Activated CD4-positive, alpha-beta memory T cell treated with anti-CD3 and anti-CD28 coated beads for 36 hours (primary cell): ENCODE measurements at regions of chr19 and their contacts with region 1.

Region 1: DNA sequence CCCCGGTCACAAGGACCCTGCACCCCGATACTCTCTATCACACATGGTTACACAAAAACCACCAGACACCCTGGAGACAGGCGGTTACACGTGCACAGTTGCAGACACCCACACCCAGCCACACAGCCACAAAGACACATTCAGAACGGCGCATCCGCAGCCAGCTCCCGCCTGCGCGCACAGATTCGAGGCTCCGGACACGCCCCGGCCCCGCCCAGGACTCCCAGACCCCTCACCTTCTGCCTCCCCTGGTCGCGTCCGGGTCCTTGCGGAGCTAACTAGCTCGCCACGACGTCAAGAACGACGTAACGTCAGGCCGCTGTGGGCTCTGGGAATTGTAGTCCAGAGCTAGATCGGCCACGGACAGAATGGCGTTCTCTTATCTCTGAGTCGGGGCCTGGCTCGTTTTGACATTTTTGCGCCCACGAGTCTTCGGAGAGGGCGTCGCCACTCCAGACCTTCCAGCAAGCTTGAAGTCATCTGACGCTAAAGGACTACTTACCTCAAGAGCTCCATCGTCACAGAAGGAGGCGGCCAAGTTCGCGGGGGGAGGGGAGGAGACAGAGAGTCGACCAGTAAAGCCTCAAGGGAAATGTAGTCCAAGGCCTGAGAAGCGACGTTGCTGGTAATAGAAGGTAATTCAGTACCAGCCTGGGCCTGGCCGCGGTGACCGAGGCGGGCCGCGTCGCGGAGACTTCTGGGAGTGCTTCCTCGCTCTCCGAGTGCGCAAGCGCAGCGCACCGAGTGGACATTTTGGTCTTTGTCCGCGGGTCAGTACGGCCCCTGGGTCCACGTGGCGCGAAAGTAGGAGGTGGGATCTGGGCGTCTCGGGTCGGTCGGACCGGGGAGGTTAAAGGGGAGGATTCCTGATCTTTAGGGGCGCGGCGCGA is at the starts of genes ZNF146 and ZNF565:
- DNase-seq: peak; percentile 98
- H3K4me3 Mint-ChIP-seq: no peak within 1 kb of the TSS
- H3K27ac Mint-ChIP-seq: no peak within 1 kb of the TSS
- H3K4me1 Mint-ChIP-seq: peaks cover 22% of the 10 kb centered on the region
- H3K27me3 Mint-ChIP-seq: no peaks in the 10 kb centered on the region
- total RNA-seq, gene ZNF146: 82.5 to 86.5 TPM
- total RNA-seq, gene ZNF565: 2.2 to 2.3 TPM

Region 2: DNA sequence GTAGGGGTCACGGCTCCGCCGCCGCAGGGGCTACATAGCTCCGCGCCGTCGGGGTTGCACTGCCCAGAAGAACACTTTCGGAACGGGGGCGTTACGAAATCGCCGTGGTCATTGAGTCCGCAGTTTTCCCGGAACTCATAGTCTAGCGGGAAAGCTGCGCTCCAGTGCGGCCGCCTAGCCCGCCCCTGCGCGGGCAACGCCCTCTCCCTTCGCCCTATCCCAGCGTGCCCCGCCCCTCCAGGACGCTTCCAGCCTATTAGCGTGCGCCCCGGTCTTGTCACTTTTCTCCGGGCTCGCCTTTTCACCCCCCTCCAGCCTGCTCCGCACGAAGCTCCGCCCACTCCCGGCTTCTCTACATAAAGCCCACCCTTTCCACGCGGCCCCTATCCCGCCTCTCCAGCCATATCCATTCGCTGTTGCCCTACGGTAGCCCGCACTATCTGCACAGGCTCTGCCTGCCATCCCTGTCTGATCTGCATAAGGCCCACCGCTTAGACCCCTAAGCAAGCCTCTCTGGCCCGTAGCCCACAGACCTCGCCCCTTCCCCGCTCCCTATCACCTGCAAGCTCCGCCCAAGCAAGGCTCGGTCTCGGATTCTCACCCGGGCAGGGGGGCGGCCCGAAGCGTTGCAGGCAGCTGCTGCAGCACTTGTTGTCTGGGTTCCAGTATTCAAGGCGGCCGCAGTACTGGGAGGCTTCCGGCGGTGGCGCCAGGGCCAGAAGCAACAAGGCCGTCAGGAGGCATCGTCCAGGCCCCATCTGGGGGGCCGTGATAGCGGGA is 474.0 kb before region 1 on chr19:
- CTCF ChIA-PET with region 1: no interaction called
- POLR2A ChIA-PET with region 1: no interaction called
- intact Hi-C with region 1: loop called (anchors 10 kb)
- DNase-seq: peak; percentile 98
- H3K4me3 Mint-ChIP-seq: peak overlapping the region; percentile 89
- H3K27ac Mint-ChIP-seq: peak overlapping the region; percentile 90
- H3K4me1 Mint-ChIP-seq: peaks cover 31% of the 10 kb centered on the region
- H3K27me3 Mint-ChIP-seq: no peaks in the 10 kb centered on the region

Region 3: GRCh38 chr19:36132489-36132891 is 82.1 kb before region 1 on chr19:
- CTCF ChIA-PET with region 1: interaction called, 18 read pairs
- POLR2A ChIA-PET with region 1: interaction called, 7 read pairs
- intact Hi-C with region 1: loop called (anchors 1 kb)
- DNase-seq: peak; percentile 72
- H3K4me3 Mint-ChIP-seq: no peak overlapping the region
- H3K27ac Mint-ChIP-seq: peak overlapping the region; percentile 86
- H3K4me1 Mint-ChIP-seq: peaks cover 34% of the 10 kb centered on the region
- H3K27me3 Mint-ChIP-seq: no peaks in the 10 kb centered on the region

Region 4: GRCh38 chr19:36489118-36489919 is 274.7 kb after region 1 on chr19 and contains the start of gene ZNF566:
- CTCF ChIA-PET with region 1: no interaction called
- POLR2A ChIA-PET with region 1: interaction called, 15 read pairs
- intact Hi-C with region 1: loop called (anchors 2 kb)
- DNase-seq: peak; percentile 96
- H3K4me3 Mint-ChIP-seq: peak within 1 kb of the TSS; percentile 95
- H3K27ac Mint-ChIP-seq: peak within 1 kb of the TSS; percentile 99
- H3K4me1 Mint-ChIP-seq: peaks cover 23% of the 10 kb centered on the region
- H3K27me3 Mint-ChIP-seq: no peaks in the 10 kb centered on the region
- total RNA-seq, gene ZNF566: 3.8 to 4.6 TPM

Region 5: DNA sequence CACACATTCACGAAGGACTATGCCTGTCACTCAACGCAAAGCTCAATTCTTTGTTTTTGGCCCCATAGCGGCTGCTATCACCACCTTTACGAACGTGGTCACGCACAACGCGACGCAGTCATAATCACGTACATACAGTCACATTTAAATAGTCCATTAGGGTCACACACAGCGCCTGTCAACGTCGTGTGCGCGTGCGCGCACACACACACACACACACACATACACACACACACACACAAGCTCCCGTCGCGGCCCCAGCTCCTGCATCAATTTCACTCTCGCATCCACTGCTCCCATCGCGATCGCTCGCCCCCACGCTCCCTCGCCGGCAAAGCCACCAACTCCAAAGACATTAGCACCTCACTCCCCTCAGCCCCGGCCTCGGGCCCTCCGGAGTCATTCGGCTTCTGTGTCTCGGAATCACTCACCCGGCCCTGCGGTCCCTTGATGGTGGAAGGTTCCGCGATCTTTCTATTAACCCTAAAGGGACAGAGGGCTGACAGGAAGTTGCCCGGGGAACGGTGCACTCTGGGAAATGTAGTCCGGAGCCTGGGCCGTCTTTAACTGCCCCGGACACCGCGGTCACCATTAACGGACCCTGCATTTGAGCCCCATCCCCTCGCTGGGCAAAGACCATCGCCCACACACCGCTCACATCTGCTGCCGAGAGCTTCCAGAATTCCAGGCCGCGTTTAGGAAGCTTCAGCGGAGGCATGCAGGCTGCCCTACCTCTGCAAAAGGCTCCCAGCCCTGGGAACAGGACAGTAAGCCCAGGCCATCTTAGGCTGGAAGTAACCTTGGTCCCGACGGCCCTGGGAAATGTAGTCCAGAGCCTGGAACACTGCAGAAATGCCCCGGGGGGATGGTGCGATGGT is 623.5 kb after region 1 on chr19 and contains the start of gene ZNF790:
- CTCF ChIA-PET with region 1: no interaction called
- POLR2A ChIA-PET with region 1: no interaction called
- intact Hi-C with region 1: loop called (anchors 10 kb)
- DNase-seq: peak; percentile 93
- H3K4me3 Mint-ChIP-seq: no peak within 1 kb of the TSS
- H3K27ac Mint-ChIP-seq: no peak within 1 kb of the TSS
- H3K4me1 Mint-ChIP-seq: peaks cover 6% of the 10 kb centered on the region
- H3K27me3 Mint-ChIP-seq: no peaks in the 10 kb centered on the region
- total RNA-seq, gene ZNF790: 6.1 to 6.9 TPM

Region 6: DNA sequence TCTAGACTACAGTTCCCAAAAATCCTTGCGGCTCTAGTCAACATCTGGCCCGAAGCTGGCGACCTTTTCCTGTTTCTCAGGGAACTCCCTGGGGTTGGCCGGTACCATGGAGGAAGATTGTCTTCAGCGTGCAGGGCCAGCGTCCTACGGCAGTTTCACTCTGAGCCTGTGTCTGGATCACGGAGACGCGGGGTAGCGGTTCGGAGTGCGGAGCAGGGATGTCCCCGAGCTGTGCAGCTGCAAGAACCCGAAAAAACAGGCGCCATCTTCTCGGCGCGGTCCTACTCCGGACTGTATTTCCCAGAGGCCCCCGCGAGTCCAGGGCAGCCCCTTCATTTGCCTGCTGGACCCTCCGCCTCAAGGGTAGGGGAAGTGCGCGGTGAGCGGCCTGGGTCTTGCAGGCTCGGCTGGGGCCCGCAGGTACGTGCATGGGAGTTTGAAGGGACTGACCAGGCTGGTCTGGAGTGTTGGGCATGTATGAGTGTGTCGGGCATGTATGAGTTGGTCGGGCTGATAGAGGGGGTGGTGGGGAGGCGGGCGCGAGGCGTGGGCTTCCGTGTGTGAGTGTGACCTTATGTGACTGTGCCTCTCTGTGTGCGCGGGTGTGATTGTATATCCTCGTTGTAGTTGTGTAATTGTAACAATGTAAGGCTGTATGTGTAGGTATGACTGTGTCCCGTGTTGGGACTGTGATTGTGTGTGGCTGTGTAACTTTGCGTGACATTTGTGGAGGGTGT is 1003.4 kb after region 1 on chr19 and contains the start of gene ZNF383:
- CTCF ChIA-PET with region 1: interaction called, 3 read pairs
- POLR2A ChIA-PET with region 1: no interaction called
- intact Hi-C with region 1: loop called (anchors 10 kb)
- DNase-seq: peak; percentile 90
- H3K4me3 Mint-ChIP-seq: peak within 1 kb of the TSS; percentile 99
- H3K27ac Mint-ChIP-seq: peak within 1 kb of the TSS; percentile 99
- H3K4me1 Mint-ChIP-seq: peaks cover 19% of the 10 kb centered on the region
- H3K27me3 Mint-ChIP-seq: no peaks in the 10 kb centered on the region
- total RNA-seq, gene ZNF383: 7.7 TPM